Right ventricle myocardium inferior (tissue), 1 donor: ENCODE measurements at regions of chr19 and their contacts with region 1.

Region 1: GRCh38 chr19:9538183-9539058 is at the start of gene ZNF426:
- DNase-seq: peak; percentile 93
- ATAC-seq: peak; percentile 94
- total RNA-seq, gene ZNF426: 12.4 TPM

Region 2: GRCh38 chr19:9323919-9324583 is 214.4 kb before region 1 on chr19 and contains the start of gene ZNF559:
- intact Hi-C with region 1: loop called (anchors 10 kb)
- DNase-seq: peak; percentile 95
- ATAC-seq: peak; percentile 96
- total RNA-seq, gene ZNF559: 16.6 TPM

Region 3: DNA sequence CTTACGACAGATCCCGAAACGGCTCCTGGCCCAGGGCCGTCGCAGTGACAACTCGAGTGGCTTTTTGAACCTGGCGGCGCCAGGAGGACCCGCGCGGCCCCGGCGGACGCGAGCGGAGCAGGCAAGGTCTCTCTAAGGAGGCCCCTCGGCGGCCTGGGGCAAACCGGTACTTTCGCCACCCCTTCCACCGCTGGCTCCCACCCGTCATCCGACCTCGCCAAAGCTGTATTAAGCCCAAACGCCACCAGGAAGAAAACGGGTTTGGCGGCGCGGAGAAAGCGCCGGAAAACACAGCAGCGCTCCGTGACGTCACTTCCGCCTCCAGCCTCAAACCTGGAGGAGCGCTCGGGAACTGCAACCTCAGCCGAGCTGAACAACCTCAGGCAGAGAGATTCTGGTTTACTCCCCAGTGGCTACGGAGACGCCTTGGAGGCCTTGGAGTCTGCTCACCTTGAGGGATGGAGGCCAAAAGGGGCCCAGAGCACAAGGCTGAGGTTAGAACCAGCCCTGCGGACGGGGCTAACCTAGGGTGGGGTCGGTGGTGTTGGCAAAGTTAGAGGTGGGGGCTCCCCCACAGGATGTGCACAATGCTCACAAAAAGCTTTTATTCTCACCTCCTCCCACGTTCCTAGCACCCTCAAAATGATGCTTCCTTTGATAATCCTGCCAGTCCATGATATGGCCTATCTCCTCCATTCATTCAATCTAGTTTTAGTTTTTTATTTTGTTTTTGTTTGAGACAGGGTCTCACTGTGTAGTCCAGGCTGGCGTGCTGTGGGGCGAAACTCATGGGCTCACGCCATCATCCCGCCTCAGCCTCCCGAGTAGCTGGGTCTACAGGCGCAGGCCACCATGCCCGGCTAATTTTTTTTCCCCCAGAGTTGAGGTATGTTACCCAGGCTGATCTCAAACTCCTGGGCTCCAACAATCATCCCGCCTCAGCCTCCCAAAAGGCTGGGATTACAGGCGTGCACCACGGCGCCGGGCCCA is 102.8 kb before region 1 on chr19 and contains the start of gene ZNF266:
- intact Hi-C with region 1: loop called (anchors 5 kb)
- DNase-seq: peak; percentile 93
- ATAC-seq: peak; percentile 93
- total RNA-seq, gene ZNF266: 7.2 TPM

Region 4: GRCh38 chr19:9523885-9524474 is 14.4 kb before region 1 on chr19:
- intact Hi-C with region 1: no loop called
- DNase-seq: no peak
- ATAC-seq: no peak

Region 5: GRCh38 chr19:9584073-9584833 is 45.8 kb after region 1 on chr19 and contains the start of gene ZNF121:
- intact Hi-C with region 1: loop called (anchors 5 kb)
- DNase-seq: peak; percentile 93
- ATAC-seq: peak; percentile 95
- total RNA-seq, gene ZNF121: 20.7 TPM

Region 6: GRCh38 chr19:9621156-9622037 is 83.0 kb after region 1 on chr19 and contains the start of gene ZNF561:
- intact Hi-C with region 1: loop called (anchors 5 kb)
- DNase-seq: peak; percentile 92
- ATAC-seq: peak; percentile 94
- total RNA-seq, gene ZNF561: 20.3 TPM

Region 7: GRCh38 chr19:9741476-9742171 is 203.2 kb after region 1 on chr19:
- intact Hi-C with region 1: no loop called
- DNase-seq: no peak
- ATAC-seq: no peak